Motor neuron (in vitro differentiated cells): ENCODE measurements at regions of chr16 and their contacts with region 1.

Region 1: GRCh38 chr16:29900102-29900887 is at the start of gene ASPHD1:
- ATAC-seq: peak; percentile 73 to 84 (median 82)
- H3K4me3 ChIP-seq: peak within 1 kb of the TSS; percentile 39 to 65 (median 46)
- H3K27ac ChIP-seq: peak within 1 kb of the TSS; percentile 86 to 88
- H3K4me1 ChIP-seq: peaks cover 22 to 23% of the 10 kb centered on the region in 2 donors
- total RNA-seq, gene ASPHD1: 8.9 to 30.8 (median 16.9) TPM

Region 2: GRCh38 chr16:29182501-29182900 is 717.8 kb before region 1 on chr16:
- in situ Hi-C with region 1: no loop called
- ATAC-seq: no peak
- H3K4me3 ChIP-seq: no peak overlapping the region
- H3K27ac ChIP-seq: peak overlapping the region in 1 of 2 donors; percentile 5
- H3K4me1 ChIP-seq: peaks cover 27 to 32% of the 10 kb centered on the region in 2 donors

Region 3: DNA sequence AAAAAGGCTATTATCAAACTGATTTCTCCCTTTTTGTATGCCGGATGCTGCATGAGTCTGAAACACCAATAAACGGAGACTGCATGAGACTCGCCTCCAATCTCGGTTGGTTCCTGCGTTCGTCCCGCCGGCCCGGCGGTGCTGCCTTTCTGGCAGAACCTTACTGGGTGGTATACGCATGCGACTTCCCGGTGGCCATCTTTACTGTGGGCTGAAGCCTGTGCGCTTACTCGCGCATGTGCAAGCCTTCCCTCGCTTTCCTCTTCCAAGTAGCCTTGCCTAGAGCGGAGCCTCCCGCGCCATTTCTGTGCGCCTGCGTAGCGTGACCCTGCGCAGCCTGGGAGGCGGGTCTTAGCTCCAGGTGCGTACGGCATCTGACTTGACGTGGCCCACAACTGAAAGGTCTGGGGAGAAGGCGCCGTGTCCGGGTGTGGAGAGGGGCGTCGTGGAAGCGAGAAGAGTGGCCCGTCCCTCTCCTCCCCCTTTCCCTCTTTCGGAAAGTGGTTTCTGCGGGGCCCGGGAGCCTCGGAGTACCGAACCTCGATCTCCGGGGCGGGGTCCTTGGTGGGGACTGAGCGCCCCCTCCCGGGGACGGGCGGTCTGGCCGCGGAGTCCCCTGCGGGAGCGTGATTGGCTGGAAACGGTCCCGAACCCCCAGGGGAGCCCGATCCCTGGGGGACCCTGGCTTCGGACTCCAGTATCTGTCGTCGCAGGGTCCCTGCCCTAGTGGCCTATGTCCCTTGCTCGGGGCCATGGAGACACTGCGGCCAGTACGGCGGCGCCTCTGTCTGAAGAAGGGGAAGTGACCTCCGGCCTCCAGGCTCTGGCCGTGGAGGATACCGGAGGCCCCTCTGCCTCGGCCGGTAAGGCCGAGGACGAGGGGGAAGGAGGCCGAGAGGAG is 84.3 kb before region 1 on chr16 and contains the start of gene PAGR1:
- in situ Hi-C with region 1: loop called in 1 of 9 experiments (anchors 25 kb)
- ATAC-seq: peak; percentile 48 to 70 (median 62)
- H3K4me3 ChIP-seq: peak within 1 kb of the TSS; percentile 49 to 86 (median 72)
- H3K27ac ChIP-seq: peak within 1 kb of the TSS; percentile 96 to 97
- H3K4me1 ChIP-seq: peaks cover 12 to 33% of the 10 kb centered on the region in 2 donors
- total RNA-seq, gene PAGR1: 13.7 to 53.0 (median 28.2) TPM